B cell (primary cell): ENCODE measurements at regions of chr7 and their contacts with region 1.

Region 1: GRCh38 chr7:23357190-23358093 is 58.3 kb downstream of the MALSU1 start:
- DNase-seq: peak; percentile 70
- ATAC-seq: peak; percentile 79
- H3K4me3 ChIP-seq: no peak overlapping the region
- H3K4me3 Mint-ChIP-seq: no peak overlapping the region
- H3K27ac ChIP-seq: no peak overlapping the region
- H3K27ac Mint-ChIP-seq: no peak overlapping the region
- H3K4me1 ChIP-seq: peaks cover 2 to 9% of the 10 kb centered on the region in 2 donors
- H3K4me1 Mint-ChIP-seq: peaks cover 15% of the 10 kb centered on the region
- H3K27me3 ChIP-seq: peaks cover 0 to 3% (median 0%) of the 10 kb centered on the region in 4 experiments
- H3K27me3 Mint-ChIP-seq: no peaks in the 10 kb centered on the region
- CTCF ChIP-seq: peak; percentile 78

Region 2: GRCh38 chr7:23373151-23374004 is 15.9 kb after region 1 on chr7:
- CTCF ChIA-PET with region 1: interaction called, 51 read pairs
- POLR2A ChIA-PET with region 1: no interaction called
- intact Hi-C with region 1: loop called (anchors 2 kb)
- DNase-seq: peak; percentile 85
- ATAC-seq: peak; percentile 72
- H3K4me3 ChIP-seq: peak overlapping the region in 2 of 5 experiments; percentile 1 to 38
- H3K4me3 Mint-ChIP-seq: peak overlapping the region; percentile 74
- H3K27ac ChIP-seq: peak overlapping the region; percentile 65 to 77
- H3K27ac Mint-ChIP-seq: peak overlapping the region; percentile 89
- H3K4me1 ChIP-seq: peaks cover 39 to 40% of the 10 kb centered on the region in 2 donors
- H3K4me1 Mint-ChIP-seq: peaks cover 59% of the 10 kb centered on the region
- H3K27me3 ChIP-seq: no peaks in the 10 kb centered on the region
- H3K27me3 Mint-ChIP-seq: no peaks in the 10 kb centered on the region
- CTCF ChIP-seq: no peak

Region 3: GRCh38 chr7:23410446-23411183 is 53.2 kb after region 1 on chr7:
- CTCF ChIA-PET with region 1: interaction called, 11 read pairs
- POLR2A ChIA-PET with region 1: no interaction called
- intact Hi-C with region 1: loop called (anchors 5 kb)
- DNase-seq: peak; percentile 87
- ATAC-seq: peak; percentile 90
- H3K4me3 ChIP-seq: no peak overlapping the region
- H3K4me3 Mint-ChIP-seq: peak overlapping the region; percentile 47
- H3K27ac ChIP-seq: peak overlapping the region; percentile 37 to 82
- H3K27ac Mint-ChIP-seq: peak overlapping the region; percentile 53
- H3K4me1 ChIP-seq: peaks cover 17 to 18% of the 10 kb centered on the region in 2 donors
- H3K4me1 Mint-ChIP-seq: peaks cover 27% of the 10 kb centered on the region
- H3K27me3 ChIP-seq: no peaks in the 10 kb centered on the region
- H3K27me3 Mint-ChIP-seq: peaks cover 3% of the 10 kb centered on the region
- CTCF ChIP-seq: no peak

Region 4: GRCh38 chr7:23462846-23463245 is 105.4 kb after region 1 on chr7:
- CTCF ChIA-PET with region 1: interaction called, 17 read pairs
- POLR2A ChIA-PET with region 1: no interaction called
- intact Hi-C with region 1: loop called (anchors 1 kb)
- DNase-seq: peak; percentile 49
- ATAC-seq: no peak
- H3K4me3 ChIP-seq: no peak overlapping the region
- H3K4me3 Mint-ChIP-seq: no peak overlapping the region
- H3K27ac ChIP-seq: no peak overlapping the region
- H3K27ac Mint-ChIP-seq: no peak overlapping the region
- H3K4me1 ChIP-seq: peaks cover 6 to 8% of the 10 kb centered on the region in 2 donors
- H3K4me1 Mint-ChIP-seq: peaks cover 14% of the 10 kb centered on the region
- H3K27me3 ChIP-seq: peaks cover 0 to 33% (median 26%) of the 10 kb centered on the region in 4 experiments
- H3K27me3 Mint-ChIP-seq: peaks cover 40% of the 10 kb centered on the region
- CTCF ChIP-seq: peak; percentile 36

Region 5: DNA sequence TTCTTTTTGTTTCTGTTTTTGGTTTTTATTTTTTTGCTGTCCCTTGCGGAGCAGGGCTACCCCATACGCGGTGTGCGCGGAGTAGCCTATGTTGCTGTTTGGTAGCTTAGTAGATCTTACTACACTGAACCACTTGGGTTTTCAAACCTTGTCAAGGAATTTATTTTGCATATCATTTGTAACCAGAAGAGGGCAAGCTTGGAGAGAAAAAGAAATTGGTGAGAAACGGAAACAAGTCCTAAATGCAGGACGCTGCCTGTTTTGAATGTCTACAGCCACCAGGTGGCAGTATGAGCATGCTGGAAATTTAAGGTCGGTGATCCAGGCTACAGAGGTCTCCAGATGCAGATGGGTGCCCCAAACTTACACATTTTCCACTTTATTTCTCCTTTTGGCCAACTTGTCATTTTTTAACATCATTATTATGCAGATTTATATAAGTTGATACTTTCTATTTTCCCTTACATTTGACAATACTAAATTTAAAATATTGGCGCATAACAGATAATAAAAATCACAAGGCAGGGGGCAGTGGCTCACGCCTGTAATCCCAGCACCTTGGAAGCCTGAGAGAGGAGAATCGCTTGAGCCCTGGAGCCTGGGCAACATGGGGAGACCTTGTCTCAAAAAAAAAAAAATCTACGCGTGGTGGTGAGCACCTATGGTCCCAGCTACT is 189.6 kb after region 1 on chr7:
- CTCF ChIA-PET with region 1: interaction called, 25 read pairs
- POLR2A ChIA-PET with region 1: no interaction called
- intact Hi-C with region 1: loop called (anchors 1 kb)
- DNase-seq: peak; percentile 90
- ATAC-seq: peak; percentile 91
- H3K4me3 ChIP-seq: peak overlapping the region in 1 of 5 experiments; percentile 18
- H3K4me3 Mint-ChIP-seq: no peak overlapping the region
- H3K27ac ChIP-seq: no peak overlapping the region
- H3K27ac Mint-ChIP-seq: no peak overlapping the region
- H3K4me1 ChIP-seq: peaks cover 8 to 13% of the 10 kb centered on the region in 2 donors
- H3K4me1 Mint-ChIP-seq: peaks cover 15% of the 10 kb centered on the region
- H3K27me3 ChIP-seq: no peaks in the 10 kb centered on the region
- H3K27me3 Mint-ChIP-seq: no peaks in the 10 kb centered on the region
- CTCF ChIP-seq: peak; percentile 98